SK-N-SH (cell line): ENCODE measurements at regions of chr2 and their contacts with region 1.

Region 1: GRCh38 chr2:1591978-1592907 is 152.1 kb downstream of the PXDN start:
- DNase-seq: peak; percentile 83
- H3K4me3 ChIP-seq: no peak overlapping the region
- H3K27ac ChIP-seq: no peak overlapping the region
- H3K4me1 ChIP-seq: peaks cover 14 to 44% of the 10 kb centered on the region in 2 experiments; a peak in 2 of 4 replicates
- H3K27me3 ChIP-seq: no peaks in the 10 kb centered on the region
- CTCF ChIP-seq: peak; percentile 50
- EP300 ChIP-seq: 0 out of 4 replicates have a peak, but pooled peaks of 1 of the 2 experiments have one; percentile 8
- RAD21 ChIP-seq: peak; percentile 75

Region 2: DNA sequence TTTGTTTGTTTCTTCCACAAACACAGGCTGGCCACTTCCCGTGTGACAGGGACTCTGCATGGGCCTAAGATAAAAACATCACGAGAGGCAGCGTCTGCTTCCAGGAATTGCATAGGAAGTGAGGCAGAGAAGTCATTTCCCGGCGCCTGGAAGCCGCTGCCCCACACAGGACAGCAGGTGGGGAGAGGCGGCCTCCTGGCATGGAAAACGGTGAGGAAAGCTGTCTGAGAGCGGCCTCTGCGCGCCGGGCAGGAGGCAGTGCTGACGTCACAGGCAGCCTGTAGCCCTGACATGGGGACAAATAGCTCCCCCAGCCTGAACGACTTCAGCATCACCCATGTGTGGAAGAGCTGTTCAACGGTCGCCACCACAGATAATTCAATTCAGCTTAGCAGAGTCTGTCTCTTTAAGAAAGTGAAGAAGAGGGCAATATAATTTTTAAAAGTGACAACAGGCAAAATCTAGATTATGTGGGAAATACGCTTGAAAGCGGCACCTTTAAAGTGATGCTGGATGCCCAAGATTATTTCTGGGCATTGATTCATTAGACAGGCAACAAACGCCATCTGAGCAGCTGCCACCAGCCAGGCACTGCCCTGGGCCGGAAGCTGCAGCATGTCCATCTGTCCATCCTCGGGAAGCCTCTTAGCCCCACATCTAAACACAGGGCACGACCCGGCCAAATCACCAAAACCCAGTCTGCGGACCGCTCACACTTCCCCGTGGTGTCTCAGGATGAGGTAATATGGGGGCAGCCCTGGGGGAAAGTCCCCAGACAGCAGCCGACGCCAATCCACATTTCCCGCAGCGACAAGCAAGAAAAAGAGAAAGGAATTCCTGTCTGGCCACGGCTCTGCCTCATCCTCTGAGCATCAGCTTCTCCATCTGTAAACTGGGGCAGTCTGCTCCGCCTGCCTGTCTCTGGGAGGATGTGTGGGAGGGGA is 13.1 kb after region 1 on chr2:
- CTCF ChIA-PET with region 1: interaction called, 10 read pairs
- POLR2A ChIA-PET with region 1: interaction called, 5 read pairs
- DNase-seq: peak; percentile 80
- H3K4me3 ChIP-seq: no peak overlapping the region
- H3K27ac ChIP-seq: peak overlapping the region; percentile 6 to 18; a peak in 3 of 4 replicates
- H3K4me1 ChIP-seq: peaks cover 25 to 31% of the 10 kb centered on the region in 2 experiments; a peak in 3 of 4 replicates
- H3K27me3 ChIP-seq: no peaks in the 10 kb centered on the region
- CTCF ChIP-seq: no peak
- EP300 ChIP-seq: no peak
- RAD21 ChIP-seq: no peak

Region 3: DNA sequence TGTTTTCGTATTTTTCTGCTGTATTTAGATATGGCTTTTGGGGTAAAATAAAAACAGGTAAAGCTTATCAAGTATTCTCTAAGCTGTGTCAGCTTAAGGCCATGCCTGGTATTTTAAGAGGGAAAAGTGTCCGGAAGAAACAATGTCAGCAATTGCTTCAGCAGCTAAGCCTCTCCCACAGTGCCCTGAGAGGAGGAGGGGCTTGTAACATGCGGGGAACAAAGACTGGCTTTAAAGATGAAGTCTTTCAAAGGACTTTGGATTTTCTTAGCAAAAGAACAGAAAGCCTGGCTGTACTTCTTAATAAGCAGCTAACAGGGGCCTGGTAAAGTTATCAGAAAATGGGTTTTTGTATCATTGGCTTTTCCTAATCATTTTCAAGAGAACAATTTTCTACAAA is 49.3 kb after region 1 on chr2:
- CTCF ChIA-PET with region 1: interaction called, 12 read pairs
- POLR2A ChIA-PET with region 1: no interaction called
- DNase-seq: no peak
- H3K4me3 ChIP-seq: no peak overlapping the region
- H3K27ac ChIP-seq: no peak overlapping the region
- H3K4me1 ChIP-seq: peaks cover 0 to 22% of the 10 kb centered on the region in 2 experiments; a peak in 1 of 4 replicates
- H3K27me3 ChIP-seq: no peaks in the 10 kb centered on the region
- CTCF ChIP-seq: no peak
- EP300 ChIP-seq: no peak
- RAD21 ChIP-seq: no peak

Region 4: GRCh38 chr2:1736997-1737480 is 144.8 kb after region 1 on chr2:
- CTCF ChIA-PET with region 1: interaction called, 35 read pairs
- POLR2A ChIA-PET with region 1: interaction called, 5 read pairs
- DNase-seq: peak; percentile 80
- H3K4me3 ChIP-seq: peak overlapping the region; percentile 10 to 32
- H3K27ac ChIP-seq: peak overlapping the region; percentile 91 to 97
- H3K4me1 ChIP-seq: peaks cover 51 to 70% of the 10 kb centered on the region in 2 experiments
- H3K27me3 ChIP-seq: no peaks in the 10 kb centered on the region
- CTCF ChIP-seq: no peak
- EP300 ChIP-seq: peak; percentile 18 to 73; a peak in 3 of 4 replicates
- RAD21 ChIP-seq: no peak

Region 5: DNA sequence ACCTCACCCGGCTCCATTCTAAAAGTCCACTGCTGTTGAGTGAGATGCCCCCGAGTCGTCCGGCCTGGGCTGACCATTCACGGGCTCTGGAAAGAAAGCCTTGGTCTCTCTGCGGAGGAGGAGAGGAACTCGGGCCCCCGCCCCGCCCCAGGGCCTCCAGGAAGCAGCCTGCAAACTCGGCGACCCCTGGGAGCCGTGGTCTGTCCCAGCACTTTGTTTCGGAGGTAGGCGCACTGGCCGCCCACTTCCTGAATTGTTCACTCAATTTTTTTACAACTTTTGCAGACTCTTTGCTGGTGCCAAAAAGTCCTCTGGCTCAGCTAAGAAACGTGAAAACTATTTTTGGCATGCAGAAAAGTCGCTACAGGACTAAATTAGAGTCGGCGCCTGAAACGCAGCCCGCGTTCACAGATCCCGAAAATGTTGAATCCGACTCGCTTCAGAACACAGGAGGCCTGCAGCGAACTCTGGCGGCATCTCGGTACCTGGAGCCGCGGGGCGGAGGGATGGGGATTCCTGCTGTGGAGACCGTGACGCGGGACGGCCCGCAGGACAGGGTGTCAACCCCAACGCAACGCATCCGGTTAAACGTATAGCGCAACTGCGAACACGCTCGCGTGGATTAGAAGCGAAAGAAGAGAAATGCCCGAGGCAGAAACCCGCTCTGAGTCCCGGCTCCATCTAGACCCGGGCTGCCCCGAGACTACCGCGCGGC is 150.6 kb after region 1 on chr2:
- CTCF ChIA-PET with region 1: interaction called, 35 read pairs
- POLR2A ChIA-PET with region 1: interaction called, 3 read pairs
- DNase-seq: peak; percentile 89
- H3K4me3 ChIP-seq: peak overlapping the region; percentile 84 to 91
- H3K27ac ChIP-seq: peak overlapping the region; percentile 95 to 98
- H3K4me1 ChIP-seq: peaks cover 30 to 57% of the 10 kb centered on the region in 2 experiments; a peak in 3 of 4 replicates
- H3K27me3 ChIP-seq: no peaks in the 10 kb centered on the region
- CTCF ChIP-seq: peak; percentile 84
- EP300 ChIP-seq: no peak; a peak in 2 of 4 replicates
- RAD21 ChIP-seq: peak; percentile 87

Region 6: DNA sequence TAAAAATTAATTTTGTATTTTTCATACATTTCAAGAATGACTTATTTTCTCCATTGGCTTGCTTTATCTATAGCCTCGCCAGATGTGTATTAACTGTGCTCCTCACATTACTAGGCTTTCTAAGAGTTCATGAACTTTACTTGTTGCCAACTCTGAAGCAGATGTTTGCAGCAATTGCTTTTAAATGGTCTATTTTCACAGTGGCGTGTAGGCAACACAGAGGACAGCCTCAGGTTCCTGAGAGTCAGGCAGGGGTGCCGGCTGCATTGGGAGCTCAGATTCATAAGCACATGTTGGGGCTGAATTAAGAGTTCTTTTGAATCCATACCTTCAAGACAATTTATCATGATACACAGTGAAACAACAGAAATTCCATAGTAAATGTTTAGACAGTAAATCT is 331.3 kb after region 1 on chr2:
- CTCF ChIA-PET with region 1: no interaction called
- POLR2A ChIA-PET with region 1: no interaction called
- DNase-seq: no peak
- H3K4me3 ChIP-seq: no peak overlapping the region
- H3K27ac ChIP-seq: peak overlapping the region in 1 of 2 experiments; percentile 50; a peak in 1 of 4 replicates
- H3K4me1 ChIP-seq: peaks cover 0 to 17% of the 10 kb centered on the region in 2 experiments; a peak in 2 of 4 replicates
- H3K27me3 ChIP-seq: no peaks in the 10 kb centered on the region
- CTCF ChIP-seq: no peak
- EP300 ChIP-seq: no peak
- RAD21 ChIP-seq: no peak